K562 (cell line): ENCODE measurements at regions of chr2 and their contacts with region 1.

Region 1: DNA sequence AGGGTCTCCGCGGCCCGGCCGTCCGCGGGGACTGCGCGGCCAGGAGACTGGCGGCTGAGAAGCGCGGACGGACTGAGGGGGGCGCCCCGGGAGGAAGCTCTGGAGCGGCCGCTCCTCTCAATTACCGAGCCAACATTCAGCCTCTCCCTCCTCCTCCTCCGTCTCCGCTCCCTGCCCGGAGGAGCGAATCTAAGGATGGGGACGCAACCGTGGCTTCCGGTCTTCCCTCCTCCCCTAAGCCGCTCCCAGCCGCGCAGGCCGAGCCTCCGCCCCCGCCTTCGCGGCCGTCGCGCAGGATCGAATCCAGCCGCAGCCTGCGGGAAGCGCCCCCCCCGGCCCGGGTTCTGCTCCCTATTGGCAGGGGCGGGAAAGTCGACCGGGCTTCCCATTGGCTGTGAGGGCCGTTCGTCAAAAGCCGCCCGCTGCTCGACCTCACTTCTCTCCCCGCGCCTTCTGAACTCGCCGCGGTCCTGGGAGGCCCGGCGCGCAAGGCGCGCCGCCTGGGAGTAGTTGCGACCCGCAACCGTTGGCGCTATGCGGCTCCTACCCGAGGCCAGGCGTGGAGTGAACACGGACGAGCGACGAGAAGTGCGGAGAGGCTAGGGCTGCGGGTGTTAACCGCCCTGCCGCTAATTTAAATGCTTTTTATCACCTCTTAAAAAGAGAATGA is at the start of gene HNRNPLL:
- DNase-seq: peak; percentile 97 to 99 (median 98)
- ATAC-seq: peak; percentile 80
- H3K4me3 ChIP-seq: peak within 1 kb of the TSS; percentile 92
- H3K27ac ChIP-seq: peak within 1 kb of the TSS; percentile 92
- H3K4me1 ChIP-seq: peaks cover 7 to 34% of the 10 kb centered on the region in 2 experiments
- H3K27me3 ChIP-seq: no peaks in the 10 kb centered on the region
- CTCF ChIP-seq: peak in 2 of 3 experiments; percentile 17 to 33; a peak in 3 of 6 replicates
- EP300 ChIP-seq: peak; percentile 61; the same call in 1 of the 2 replicates
- POLR2A ChIP-seq: peak; percentile 92
- RAD21 ChIP-seq: no peak
- polyA plus RNA-seq, gene HNRNPLL: 19.8 to 24.7 TPM

Region 2: DNA sequence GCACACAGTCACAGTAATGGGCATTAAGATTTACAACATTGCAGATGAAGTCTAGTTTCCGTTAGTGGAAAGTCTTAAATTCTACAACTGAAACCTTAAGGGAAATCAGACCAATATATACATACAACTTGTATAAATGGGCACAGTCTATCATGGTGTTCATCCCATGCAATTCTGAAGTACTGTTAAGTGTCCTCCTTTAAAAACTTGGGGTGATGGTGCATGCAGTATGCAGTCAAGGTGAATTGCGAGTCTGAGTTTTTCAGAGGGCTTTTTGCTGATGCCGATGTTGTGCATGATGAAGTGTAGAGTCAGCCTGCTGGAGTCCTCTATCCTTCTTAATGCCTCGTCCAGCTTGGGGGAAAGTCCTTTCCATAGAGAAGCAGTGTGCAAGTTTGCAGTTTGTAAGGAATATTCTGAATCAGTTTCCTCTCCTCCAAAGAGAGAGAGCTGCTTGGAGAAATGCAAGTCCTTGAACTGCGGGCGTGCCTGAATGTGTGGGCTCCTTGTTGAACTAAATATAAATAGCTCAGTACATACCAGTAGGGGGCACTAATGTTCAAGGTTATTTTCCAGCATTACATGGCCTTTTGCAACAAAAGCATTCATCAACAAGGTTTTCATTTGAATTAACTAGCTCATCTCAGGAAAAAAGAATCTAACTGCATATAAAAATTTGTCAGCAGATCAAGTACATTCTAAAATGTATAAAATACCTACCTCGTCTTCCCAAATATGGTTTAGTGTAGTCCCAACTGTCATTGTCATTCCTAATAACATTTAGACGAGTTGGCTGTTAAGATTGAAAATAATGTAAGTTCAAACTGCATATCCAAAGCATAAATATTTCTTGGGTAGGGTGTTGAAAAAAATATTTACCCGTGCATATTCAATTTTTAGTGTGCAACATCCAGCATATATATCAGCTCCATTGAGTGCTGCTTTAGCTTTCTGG is 21.4 kb before region 1 on chr2:
- CTCF ChIA-PET with region 1: no interaction called
- POLR2A ChIA-PET with region 1: interaction called, 15 read pairs
- in situ Hi-C with region 1: no loop called
- intact Hi-C with region 1: no loop called
- DNase-seq: peak; percentile 24 to 82 (median 38)
- ATAC-seq: peak; percentile 84
- H3K4me3 ChIP-seq: no peak overlapping the region
- H3K27ac ChIP-seq: no peak overlapping the region
- H3K4me1 ChIP-seq: no peaks in the 10 kb centered on the region
- H3K27me3 ChIP-seq: no peaks in the 10 kb centered on the region
- CTCF ChIP-seq: peak; percentile 52 to 80 (median 66)
- EP300 ChIP-seq: no peak; the same call in 1 of the 2 replicates
- POLR2A ChIP-seq: no peak
- RAD21 ChIP-seq: peak; percentile 79 to 83

Region 3: GRCh38 chr2:38615237-38615636 is 12.4 kb after region 1 on chr2:
- CTCF ChIA-PET with region 1: no interaction called
- POLR2A ChIA-PET with region 1: interaction called, 10 read pairs
- in situ Hi-C with region 1: no loop called
- intact Hi-C with region 1: no loop called
- DNase-seq: peak in 3 of 4 experiments; percentile 20 to 40 (median 33)
- ATAC-seq: no peak
- H3K4me3 ChIP-seq: no peak overlapping the region
- H3K27ac ChIP-seq: peak overlapping the region; percentile 64; the same call in 1 of the 3 replicates
- H3K4me1 ChIP-seq: peaks cover 6 to 45% of the 10 kb centered on the region in 2 experiments
- H3K27me3 ChIP-seq: no peaks in the 10 kb centered on the region
- CTCF ChIP-seq: no peak
- EP300 ChIP-seq: peak; percentile 33; the same call in 1 of the 2 replicates
- POLR2A ChIP-seq: no peak
- RAD21 ChIP-seq: no peak

Region 4: GRCh38 chr2:38665854-38666555 is 63.1 kb after region 1 on chr2 and contains the start of gene GALM:
- CTCF ChIA-PET with region 1: no interaction called
- POLR2A ChIA-PET with region 1: interaction called, 5 read pairs
- in situ Hi-C with region 1: loop called (anchors 5 kb)
- intact Hi-C with region 1: loop called (anchors 1 kb)
- DNase-seq: peak; percentile 80 to 89 (median 82)
- ATAC-seq: peak; percentile 91
- H3K4me3 ChIP-seq: peak within 1 kb of the TSS; percentile 64
- H3K27ac ChIP-seq: peak within 1 kb of the TSS; percentile 74
- H3K4me1 ChIP-seq: peaks cover 7 to 16% of the 10 kb centered on the region in 2 experiments; a peak in 4 of 5 replicates
- H3K27me3 ChIP-seq: no peaks in the 10 kb centered on the region
- CTCF ChIP-seq: no peak
- EP300 ChIP-seq: peak; percentile 62
- POLR2A ChIP-seq: peak; percentile 65
- RAD21 ChIP-seq: no peak
- polyA plus RNA-seq, gene GALM: 38.0 to 51.7 TPM

Region 5: GRCh38 chr2:38720613-38721241 is 117.9 kb after region 1 on chr2:
- CTCF ChIA-PET with region 1: interaction called, 6 read pairs
- POLR2A ChIA-PET with region 1: interaction called, 3 read pairs
- in situ Hi-C with region 1: no loop called
- intact Hi-C with region 1: loop called (anchors 1 kb)
- DNase-seq: peak in 1 of 4 experiments; percentile 55
- ATAC-seq: peak; percentile 65
- H3K4me3 ChIP-seq: no peak overlapping the region
- H3K27ac ChIP-seq: no peak overlapping the region
- H3K4me1 ChIP-seq: no peaks in the 10 kb centered on the region; a peak in 2 of 5 replicates
- H3K27me3 ChIP-seq: no peaks in the 10 kb centered on the region
- CTCF ChIP-seq: no peak
- EP300 ChIP-seq: no peak
- POLR2A ChIP-seq: no peak
- RAD21 ChIP-seq: peak in 1 of 2 experiments; percentile 13; a peak in 1 of 4 replicates